ENCODE measurements at regions of chr10 and their contacts with region 1.

Region 1: DNA sequence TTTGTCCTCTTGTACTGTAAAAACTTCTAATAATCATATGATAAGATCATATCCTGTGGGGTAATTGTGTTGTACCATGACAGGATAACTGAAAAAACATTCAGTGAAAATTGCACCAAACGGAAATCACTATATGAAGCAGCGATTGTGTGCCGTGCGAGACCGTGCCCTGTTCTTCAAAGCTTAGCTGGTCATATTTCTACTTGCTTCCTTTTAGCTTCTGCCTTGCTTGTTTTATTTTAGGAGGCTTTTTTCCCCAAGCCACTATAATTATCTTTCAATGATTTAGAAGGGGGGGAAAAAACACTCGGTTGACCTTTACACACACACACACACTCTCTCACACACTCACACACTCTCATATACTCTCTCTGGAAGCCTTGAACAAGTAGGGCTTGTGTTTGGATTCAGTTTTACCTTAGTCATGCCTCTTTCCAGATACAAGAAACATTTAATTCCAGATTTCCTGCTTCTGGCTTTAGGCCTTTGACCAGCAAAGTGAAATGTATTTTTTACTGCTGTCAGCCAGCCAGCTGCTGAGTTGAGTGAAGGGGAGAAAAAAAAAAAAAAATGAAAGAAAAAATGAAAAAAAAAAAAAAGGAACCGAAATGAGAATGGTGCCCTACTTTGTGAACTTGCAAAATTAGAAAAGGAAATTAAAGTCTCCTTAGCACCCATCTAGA is 181.4 kb downstream of the ARID5B start:
- DNase-seq: no peak
- H3K4me3 ChIP-seq: peak overlapping the region; percentile 22
- H3K27ac ChIP-seq: peak overlapping the region; percentile 86
- H3K4me1 ChIP-seq: peaks cover 72% of the 10 kb centered on the region
- H3K27me3 ChIP-seq: no peaks in the 10 kb centered on the region
- CTCF ChIP-seq: no peak

Region 2: DNA sequence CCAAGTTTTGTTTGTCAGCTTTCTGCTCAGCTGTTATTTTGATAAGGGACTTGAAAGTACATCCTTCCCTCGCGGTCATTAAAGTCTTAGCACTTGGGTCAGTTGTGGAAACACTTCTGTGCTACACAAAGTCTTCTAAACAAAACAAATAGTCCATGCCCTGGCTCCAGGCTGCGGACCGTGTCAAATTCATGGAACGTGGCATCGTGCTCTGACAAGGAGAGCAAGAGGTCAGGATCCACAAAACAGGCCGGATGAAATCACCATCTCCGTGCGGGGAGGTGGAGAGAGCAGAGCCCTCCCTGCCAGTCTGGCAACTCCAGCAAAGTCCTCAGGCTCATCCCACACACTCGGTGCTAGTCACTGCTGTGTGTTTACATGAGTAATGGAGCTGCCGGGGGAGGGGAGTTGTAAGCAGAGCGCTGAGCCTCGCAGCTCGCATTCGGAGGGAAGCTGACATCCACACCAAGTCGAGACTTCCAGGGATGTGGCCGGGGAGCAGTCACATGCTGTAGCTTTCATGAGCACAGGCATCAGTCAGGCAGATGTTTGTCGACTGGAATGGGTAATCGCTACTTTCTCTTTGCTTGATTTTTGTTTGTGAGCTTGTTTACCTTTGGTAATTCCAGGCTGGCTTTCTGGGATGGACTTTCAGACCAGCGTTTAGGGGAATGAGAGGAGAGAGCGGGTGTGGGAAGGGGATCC is 33.8 kb before region 1 on chr10:
- intact Hi-C with region 1: loop called (anchors 5 kb)
- DNase-seq: peak; percentile 82
- H3K4me3 ChIP-seq: peak overlapping the region; percentile 68
- H3K27ac ChIP-seq: peak overlapping the region; percentile 94
- H3K4me1 ChIP-seq: peaks cover 95% of the 10 kb centered on the region
- H3K27me3 ChIP-seq: no peaks in the 10 kb centered on the region
- CTCF ChIP-seq: no peak

Measured in left ventricle myocardium inferior (tissue), 1 donor.